ENCODE measurements at regions of chr21 and their contacts with region 1.

Region 1: DNA sequence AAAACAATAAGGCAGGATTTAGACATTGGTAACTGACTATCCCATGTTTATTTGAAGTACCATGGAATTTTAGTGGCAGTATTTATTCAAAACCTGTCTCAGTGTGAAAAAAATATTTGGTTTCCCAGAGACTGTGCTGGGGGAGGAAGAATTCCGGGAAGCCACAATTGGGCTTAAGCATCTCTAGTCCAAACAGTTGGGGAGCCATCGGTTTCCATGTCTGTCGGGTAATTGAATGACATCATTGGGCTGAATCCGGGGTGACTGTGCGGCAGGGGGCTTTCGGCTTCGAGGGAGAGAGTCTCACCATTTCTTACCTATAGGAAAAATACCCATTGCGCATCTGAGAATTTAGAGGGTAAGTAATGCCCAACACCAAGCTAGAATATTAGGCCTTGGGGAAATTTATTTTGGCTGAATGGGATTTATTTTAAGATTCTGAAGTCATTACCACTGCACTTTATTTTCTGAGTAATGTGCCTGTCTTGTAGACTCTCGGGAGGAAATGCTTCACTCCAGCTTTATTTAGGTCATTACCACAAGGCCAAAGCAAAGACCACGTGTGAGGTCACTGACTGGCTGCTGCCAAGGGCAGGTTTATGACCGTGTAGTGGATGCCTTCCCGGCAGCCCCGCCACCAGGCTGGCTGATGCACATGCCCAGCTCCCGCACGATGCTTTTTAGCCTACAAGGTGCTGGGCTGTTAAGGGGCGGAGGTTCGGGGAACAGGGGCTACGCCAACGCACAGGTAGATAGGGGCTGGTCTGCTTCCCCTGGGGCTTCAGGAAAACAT is 23.1 kb upstream of the UMODL1 start:
- DNase-seq: peak; percentile 92 to 93
- ATAC-seq: peak; percentile 94
- H3K4me3 ChIP-seq: no peak overlapping the region
- H3K27ac ChIP-seq: peak overlapping the region; percentile 78 to 95
- H3K4me1 ChIP-seq: peaks cover 0 to 4% of the 10 kb centered on the region in 2 donors
- H3K27me3 ChIP-seq: no peaks in the 10 kb centered on the region

Region 2: DNA sequence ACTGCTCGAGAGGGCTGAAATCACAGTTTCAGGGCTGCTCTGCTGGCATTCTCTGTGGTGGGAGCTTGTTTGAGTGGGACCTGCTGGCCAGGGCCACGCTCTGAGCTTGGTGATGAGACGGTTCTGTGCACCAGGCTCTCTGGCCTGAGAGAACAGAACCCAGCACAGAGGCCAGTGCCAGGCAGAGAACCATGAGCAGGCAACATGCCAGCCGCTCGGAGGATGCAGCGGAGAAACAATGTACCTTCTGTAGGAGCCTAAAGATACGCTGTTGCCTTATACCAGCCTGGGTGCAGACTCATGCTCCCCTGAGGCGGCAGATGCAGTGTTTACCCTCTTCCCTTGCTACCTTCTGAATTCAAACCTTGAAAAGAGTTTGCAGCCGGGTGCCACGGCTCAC is 104.2 kb before region 1 on chr21:
- intact Hi-C with region 1: no loop called
- DNase-seq: peak; percentile 24 to 49
- ATAC-seq: no peak
- H3K4me3 ChIP-seq: no peak overlapping the region
- H3K27ac ChIP-seq: no peak overlapping the region
- H3K4me1 ChIP-seq: peaks cover 0 to under 1% of the 10 kb centered on the region in 2 donors
- H3K27me3 ChIP-seq: no peaks in the 10 kb centered on the region

Region 3: GRCh38 chr21:41953831-41954653 is 94.0 kb before region 1 on chr21 and contains the start of gene C2CD2:
- intact Hi-C with region 1: loop called in 1 of 2 experiments (anchors 5 kb)
- DNase-seq: peak; percentile 83 to 92
- ATAC-seq: peak; percentile 89
- H3K4me3 ChIP-seq: peak within 1 kb of the TSS; percentile 76 to 78
- H3K27ac ChIP-seq: peak within 1 kb of the TSS in 1 of 2 donors; percentile 78
- H3K4me1 ChIP-seq: no peaks in the 10 kb centered on the region
- H3K27me3 ChIP-seq: no peaks in the 10 kb centered on the region
- total RNA-seq, gene C2CD2: 56.8 to 59.8 TPM

Region 4: DNA sequence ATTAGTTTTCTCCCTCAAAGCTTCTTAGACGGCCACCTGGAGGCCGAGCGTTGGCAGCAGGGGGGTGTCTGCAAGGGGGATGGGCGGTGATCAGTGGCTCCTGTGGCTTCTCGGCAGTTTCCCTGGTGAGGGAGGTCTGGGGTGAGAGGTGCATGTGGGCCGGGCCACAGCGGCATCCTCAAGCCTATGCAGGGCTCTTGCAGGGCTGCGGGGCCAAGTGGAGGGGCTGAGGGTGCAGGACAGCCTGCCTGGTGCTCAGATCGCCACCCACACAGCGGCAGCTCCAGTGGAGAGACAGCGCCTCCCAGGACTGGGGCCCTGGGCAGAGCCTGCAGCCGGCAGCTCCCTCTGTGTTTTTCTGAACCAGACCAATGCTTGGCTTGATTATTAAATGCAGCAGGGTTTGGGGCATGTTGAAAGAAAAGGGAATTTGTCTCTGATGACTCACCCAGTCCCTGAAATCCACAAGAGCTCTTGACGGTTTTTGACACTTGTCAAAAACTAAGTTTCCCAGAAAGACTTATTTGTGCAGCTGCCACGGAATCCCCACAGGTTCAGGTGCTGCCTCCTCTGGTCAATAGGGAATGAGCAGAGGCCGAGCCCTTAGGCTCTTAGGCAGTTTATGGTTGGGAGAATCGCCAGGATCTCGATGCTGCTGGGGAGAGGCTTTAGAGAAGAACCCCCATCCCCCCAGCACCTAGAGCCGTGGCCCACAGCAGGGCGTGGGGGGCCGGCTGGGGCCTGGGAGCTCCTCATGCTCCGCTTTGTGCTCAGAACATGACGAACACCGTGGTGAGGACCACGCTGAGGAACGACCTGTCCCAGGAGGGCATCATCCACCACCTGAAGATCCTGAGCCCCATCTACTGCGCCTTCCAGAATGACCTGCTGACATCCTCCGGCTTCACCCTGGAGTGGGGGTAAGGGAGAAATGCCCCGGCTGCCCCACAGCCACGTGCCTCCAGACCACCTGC is 77.8 kb after region 1 on chr21:
- intact Hi-C with region 1: no loop called
- DNase-seq: peak in 1 of 2 donors; percentile 37
- ATAC-seq: no peak
- H3K4me3 ChIP-seq: no peak overlapping the region
- H3K27ac ChIP-seq: no peak overlapping the region
- H3K4me1 ChIP-seq: no peaks in the 10 kb centered on the region
- H3K27me3 ChIP-seq: no peaks in the 10 kb centered on the region